Right ventricle myocardium inferior (tissue), 1 donor: ENCODE measurements at regions of chr4 and their contacts with region 1.

Region 1: DNA sequence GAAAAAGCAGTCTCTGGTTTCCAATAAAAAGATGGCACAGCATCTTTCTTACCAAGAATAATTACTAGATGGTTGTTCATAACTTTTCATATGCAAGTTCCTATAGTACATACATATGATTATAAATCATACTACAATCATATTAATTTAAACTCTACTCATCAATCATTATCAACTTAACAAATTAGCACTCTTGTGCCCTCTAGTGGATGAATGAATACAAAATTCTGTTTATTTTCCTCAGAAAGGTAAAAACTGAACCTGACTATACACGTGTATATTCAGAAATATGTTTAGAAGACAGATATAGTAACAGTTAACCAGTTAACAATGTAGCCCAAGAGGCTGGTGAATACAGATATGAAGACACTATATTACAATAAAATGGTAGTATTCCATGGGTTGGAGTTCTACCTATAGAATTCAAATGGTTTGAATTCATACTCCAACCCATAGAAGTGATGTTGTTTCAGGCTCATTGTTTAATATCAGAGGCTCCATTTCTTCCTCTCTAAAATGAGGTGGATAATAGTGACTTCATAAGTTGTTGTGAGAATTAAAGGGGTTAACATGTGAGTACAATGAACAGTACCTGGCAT is 100.0 kb downstream of the ADAMTS3 start:
- DNase-seq: no peak
- ATAC-seq: no peak

Region 2: DNA sequence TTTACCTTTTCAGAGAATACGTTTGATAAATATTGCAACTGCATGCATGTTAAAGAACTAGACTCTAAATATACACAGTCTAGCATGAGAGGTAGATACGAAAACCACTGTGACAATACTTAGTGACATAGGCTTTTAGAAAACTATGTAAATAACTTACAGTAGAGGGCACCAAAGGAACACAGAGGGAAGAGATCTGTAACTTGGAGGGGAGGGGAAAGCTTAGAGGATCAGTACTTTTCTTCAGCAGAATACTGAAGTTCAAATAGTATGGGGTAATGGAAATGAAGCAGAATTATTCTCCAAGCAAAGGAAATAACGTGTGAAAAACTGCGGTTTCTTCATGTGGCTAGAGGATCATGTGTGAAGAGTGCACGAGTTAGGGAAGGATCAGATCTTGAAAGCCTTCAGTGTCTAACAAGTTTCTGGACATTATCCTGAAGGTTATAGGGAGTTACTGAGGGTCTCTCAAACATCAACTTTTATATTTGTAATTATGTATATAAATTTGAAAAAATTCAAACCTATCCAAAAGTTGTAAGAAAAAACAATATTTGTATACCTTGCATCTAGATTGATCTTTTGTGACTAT is 172.9 kb before region 1 on chr4:
- intact Hi-C with region 1: loop called (anchors 2 kb)
- DNase-seq: no peak
- ATAC-seq: peak; percentile 72

Region 3: GRCh38 chr4:72325215-72325614 is 143.8 kb before region 1 on chr4:
- intact Hi-C with region 1: loop called (anchors 1 kb)
- DNase-seq: no peak
- ATAC-seq: no peak

Region 4: DNA sequence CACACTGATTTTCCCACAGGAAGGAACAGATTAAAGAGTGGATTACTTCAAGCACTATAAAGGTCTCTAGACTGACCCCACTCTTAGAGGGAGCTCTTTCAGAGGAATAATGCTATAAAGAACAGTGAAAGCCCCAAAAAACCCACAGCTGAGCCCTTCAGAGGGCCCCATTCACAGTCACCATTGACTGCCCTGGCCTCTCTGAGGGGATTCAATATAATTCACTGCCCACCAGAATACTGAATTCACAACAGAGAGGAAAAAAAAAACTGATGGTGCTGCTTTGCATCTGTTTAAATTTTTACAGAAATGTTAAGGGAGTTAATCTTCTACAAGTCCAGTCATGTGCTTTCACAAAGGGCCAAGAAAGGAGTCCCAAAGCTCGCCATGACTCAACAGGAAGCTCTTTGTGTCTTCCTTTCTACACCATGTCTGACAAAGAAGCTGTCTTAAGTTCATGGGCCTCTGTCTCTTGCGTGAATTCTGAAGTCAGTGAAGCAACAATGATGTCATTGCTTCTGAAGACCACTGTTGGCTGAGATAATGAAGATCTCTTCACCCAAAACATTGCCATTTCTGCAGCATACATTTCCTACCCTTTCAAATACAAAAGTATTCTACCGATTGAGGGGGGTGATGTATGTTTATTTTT is 74.9 kb before region 1 on chr4:
- intact Hi-C with region 1: no loop called
- DNase-seq: no peak
- ATAC-seq: no peak

Region 5: DNA sequence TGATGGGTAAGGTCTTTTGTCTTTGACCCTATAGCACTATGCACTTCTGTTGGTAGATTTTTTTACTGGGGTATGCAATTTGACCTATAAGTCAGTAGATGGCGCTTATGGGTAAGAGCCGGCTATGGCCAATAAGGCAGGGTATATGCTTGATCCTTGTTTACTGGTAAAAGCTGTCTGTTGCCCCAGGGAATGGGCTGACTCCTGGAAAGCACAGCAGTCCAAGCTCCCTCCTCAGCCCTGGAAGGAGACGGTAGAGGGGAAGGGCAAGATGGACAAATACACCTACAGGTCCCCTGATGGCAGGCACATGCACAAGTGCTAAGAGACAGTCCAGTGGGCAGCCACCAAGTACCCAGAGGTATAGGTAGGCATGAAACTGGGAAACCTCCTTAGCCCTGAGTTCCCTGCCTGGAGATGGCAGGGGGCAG is 36.3 kb after region 1 on chr4:
- intact Hi-C with region 1: no loop called
- DNase-seq: no peak
- ATAC-seq: peak; percentile 73

Region 6: DNA sequence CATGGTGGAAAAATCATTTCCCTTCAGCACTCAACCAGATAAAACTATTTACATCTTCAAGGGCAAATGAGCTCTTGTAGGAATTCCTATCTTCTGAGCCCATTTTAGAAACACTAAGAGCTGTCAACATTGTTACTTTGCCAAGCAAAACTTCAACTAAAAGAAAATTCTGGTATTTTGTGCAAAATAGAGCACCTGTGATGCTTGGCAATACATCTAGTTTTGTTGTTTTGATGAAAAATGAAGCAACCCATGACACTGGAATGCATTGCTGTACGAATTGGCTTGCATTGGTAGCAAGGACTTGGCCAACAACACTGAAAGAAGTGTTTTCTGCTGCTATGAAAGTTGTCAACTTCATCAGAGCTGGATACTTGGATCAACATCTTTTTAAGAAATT is 406.1 kb after region 1 on chr4:
- intact Hi-C with region 1: no loop called
- DNase-seq: no peak
- ATAC-seq: no peak